OCI-LY7 (cell line): ENCODE measurements at regions of chr19 and their contacts with region 1.

Region 1: DNA sequence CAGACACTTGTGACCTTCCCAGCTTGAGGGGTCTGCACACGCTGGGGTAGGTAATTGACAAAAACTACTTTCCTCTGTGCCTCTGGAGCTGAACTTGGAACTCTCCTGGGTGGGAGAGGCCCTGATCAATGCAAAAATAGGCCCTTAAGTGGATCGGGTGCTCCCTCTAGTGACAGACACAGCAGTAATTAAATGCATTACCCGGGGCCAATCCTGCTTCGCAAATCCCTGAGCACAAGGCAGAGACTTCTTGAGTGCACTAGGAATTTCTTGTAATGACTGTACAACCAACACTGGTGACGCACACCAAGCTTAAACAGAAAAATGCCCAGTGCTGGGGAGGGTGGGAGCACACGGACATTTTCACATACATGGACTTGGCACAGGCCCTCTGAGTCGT is 10.6 kb upstream of the UBE2S start:
- DNase-seq: peak; percentile 76
- H3K4me3 ChIP-seq: no peak overlapping the region
- H3K27ac ChIP-seq: no peak overlapping the region
- H3K4me1 ChIP-seq: peaks cover 5% of the 10 kb centered on the region
- CTCF ChIP-seq: peak; percentile 95

Region 2: GRCh38 chr19:55212447-55212846 is 205.7 kb before region 1 on chr19:
- CTCF ChIA-PET with region 1: no interaction called
- POLR2A ChIA-PET with region 1: no interaction called
- intact Hi-C with region 1: loop called (anchors 1 kb)
- DNase-seq: peak; percentile 87
- H3K4me3 ChIP-seq: no peak overlapping the region
- H3K27ac ChIP-seq: no peak overlapping the region
- H3K4me1 ChIP-seq: peaks cover 16% of the 10 kb centered on the region
- CTCF ChIP-seq: peak; percentile 97

Region 3: DNA sequence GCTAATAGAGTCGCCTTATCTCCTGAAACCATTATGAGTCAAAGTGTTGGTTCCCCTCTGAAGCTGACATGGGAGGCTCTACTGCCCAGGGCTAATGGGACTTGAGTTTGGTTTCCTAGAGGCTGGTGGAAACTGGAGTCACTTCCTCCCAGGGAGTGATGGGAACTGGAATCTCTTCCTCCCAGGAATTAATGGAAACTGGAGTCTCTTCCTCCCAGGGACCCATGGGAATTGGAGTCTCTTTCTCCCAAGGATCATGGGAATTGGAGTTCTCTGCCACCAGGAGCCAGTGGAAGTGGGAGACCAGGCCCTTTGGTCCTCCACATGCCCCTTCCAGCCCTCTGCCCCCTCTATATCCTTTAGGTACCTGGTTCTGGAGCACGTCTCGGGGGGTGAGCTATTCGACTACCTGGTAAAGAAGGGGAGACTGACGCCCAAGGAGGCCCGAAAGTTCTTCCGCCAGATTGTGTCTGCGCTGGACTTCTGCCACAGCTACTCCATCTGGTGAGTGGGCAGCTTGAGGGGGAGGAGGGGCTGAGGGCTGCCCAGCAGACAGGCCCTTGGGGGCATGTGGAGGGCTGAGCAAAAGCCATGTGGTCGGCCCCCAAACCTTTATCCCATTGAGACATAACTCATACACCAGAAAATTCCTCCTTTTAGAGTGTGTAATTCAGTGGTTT is 128.9 kb before region 1 on chr19:
- CTCF ChIA-PET with region 1: no interaction called
- POLR2A ChIA-PET with region 1: no interaction called
- intact Hi-C with region 1: loop called (anchors 5 kb)
- DNase-seq: no peak
- H3K4me3 ChIP-seq: no peak overlapping the region
- H3K27ac ChIP-seq: no peak overlapping the region
- H3K4me1 ChIP-seq: peaks cover 22% of the 10 kb centered on the region
- CTCF ChIP-seq: no peak

Region 4: DNA sequence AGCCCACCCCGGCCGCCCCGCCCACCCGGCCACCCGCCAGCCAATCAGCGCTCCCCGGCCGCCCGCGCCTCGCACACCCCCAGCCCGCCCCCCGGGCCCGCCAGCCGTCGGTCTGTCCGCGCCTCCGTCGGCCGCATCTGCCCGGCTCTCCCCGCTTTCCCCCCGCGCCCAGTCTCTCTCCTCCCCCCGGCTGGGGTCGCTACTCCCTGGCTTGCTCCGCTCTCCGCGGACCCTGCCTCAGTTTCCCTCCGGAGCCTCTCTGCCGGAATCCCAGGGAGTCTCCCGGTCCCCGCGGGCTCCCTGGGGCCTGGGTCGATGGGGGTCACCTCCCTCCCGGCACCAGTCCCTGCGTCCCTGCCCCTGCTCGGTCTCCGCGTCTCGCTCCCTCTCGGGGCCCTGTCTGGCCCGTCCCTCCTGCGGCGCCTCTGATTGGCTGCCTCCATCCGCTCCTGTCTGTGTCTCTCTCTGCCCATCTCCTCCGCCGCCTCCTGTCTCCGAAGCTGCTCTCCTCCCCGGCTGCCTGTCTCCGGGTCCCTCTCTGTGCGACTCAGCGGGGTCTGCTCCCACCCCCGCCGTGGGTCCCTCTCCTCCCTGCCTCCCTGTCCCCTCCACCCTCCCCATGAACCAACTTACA is 48.4 kb before region 1 on chr19:
- CTCF ChIA-PET with region 1: no interaction called
- POLR2A ChIA-PET with region 1: no interaction called
- intact Hi-C with region 1: no loop called
- DNase-seq: no peak
- H3K4me3 ChIP-seq: no peak overlapping the region
- H3K27ac ChIP-seq: no peak overlapping the region
- H3K4me1 ChIP-seq: no peaks in the 10 kb centered on the region
- CTCF ChIP-seq: no peak

Region 5: GRCh38 chr19:55599468-55600279 is 181.5 kb after region 1 on chr19 and contains the start of gene FIZ1:
- CTCF ChIA-PET with region 1: no interaction called
- POLR2A ChIA-PET with region 1: no interaction called
- intact Hi-C with region 1: no loop called
- DNase-seq: peak; percentile 98
- H3K4me3 ChIP-seq: peak within 1 kb of the TSS; percentile 74
- H3K27ac ChIP-seq: peak within 1 kb of the TSS; percentile 94
- H3K4me1 ChIP-seq: peaks cover 33% of the 10 kb centered on the region
- CTCF ChIP-seq: no peak
- total RNA-seq, gene FIZ1: 6.0 and 6.8 TPM in 2 replicates